Calu3 (cell line): ENCODE measurements at regions of chr6 and their contacts with region 1.

Region 1: GRCh38 chr6:165884813-165885765 is 222.0 kb upstream of the PDE10A start:
- DNase-seq: peak; percentile 85
- H3K4me3 Mint-ChIP-seq: no peak overlapping the region
- H3K27ac Mint-ChIP-seq: no peak overlapping the region
- H3K4me1 Mint-ChIP-seq: peaks cover 20% of the 10 kb centered on the region
- H3K27me3 Mint-ChIP-seq: peaks cover 35% of the 10 kb centered on the region
- CTCF ChIP-seq: peak; percentile 95

Region 2: GRCh38 chr6:165987483-165988301 is 102.6 kb after region 1 on chr6:
- CTCF ChIA-PET with region 1: no interaction called
- intact Hi-C with region 1: loop called (anchors 5 kb)
- DNase-seq: peak; percentile 69
- H3K4me3 Mint-ChIP-seq: peak overlapping the region; percentile 67
- H3K27ac Mint-ChIP-seq: no peak overlapping the region
- H3K4me1 Mint-ChIP-seq: peaks cover 12% of the 10 kb centered on the region
- H3K27me3 Mint-ChIP-seq: peaks cover 70% of the 10 kb centered on the region
- CTCF ChIP-seq: no peak

Region 3: GRCh38 chr6:166097915-166098522 is 212.9 kb after region 1 on chr6:
- CTCF ChIA-PET with region 1: interaction called, 9 read pairs
- intact Hi-C with region 1: loop called (anchors 1 kb)
- DNase-seq: peak; percentile 85
- H3K4me3 Mint-ChIP-seq: peak overlapping the region; percentile 63
- H3K27ac Mint-ChIP-seq: no peak overlapping the region
- H3K4me1 Mint-ChIP-seq: no peaks in the 10 kb centered on the region
- H3K27me3 Mint-ChIP-seq: peaks cover 14% of the 10 kb centered on the region
- CTCF ChIP-seq: peak; percentile 70

Region 4: GRCh38 chr6:166106076-166106686 is 221.1 kb after region 1 on chr6:
- CTCF ChIA-PET with region 1: interaction called, 16 read pairs
- intact Hi-C with region 1: loop called (anchors 1 kb)
- DNase-seq: peak; percentile 80
- H3K4me3 Mint-ChIP-seq: no peak overlapping the region
- H3K27ac Mint-ChIP-seq: no peak overlapping the region
- H3K4me1 Mint-ChIP-seq: no peaks in the 10 kb centered on the region
- H3K27me3 Mint-ChIP-seq: peaks cover 42% of the 10 kb centered on the region
- CTCF ChIP-seq: peak; percentile 84